Calu3 (cell line): ENCODE measurements at regions of chr14 and their contacts with region 1.

Region 1: DNA sequence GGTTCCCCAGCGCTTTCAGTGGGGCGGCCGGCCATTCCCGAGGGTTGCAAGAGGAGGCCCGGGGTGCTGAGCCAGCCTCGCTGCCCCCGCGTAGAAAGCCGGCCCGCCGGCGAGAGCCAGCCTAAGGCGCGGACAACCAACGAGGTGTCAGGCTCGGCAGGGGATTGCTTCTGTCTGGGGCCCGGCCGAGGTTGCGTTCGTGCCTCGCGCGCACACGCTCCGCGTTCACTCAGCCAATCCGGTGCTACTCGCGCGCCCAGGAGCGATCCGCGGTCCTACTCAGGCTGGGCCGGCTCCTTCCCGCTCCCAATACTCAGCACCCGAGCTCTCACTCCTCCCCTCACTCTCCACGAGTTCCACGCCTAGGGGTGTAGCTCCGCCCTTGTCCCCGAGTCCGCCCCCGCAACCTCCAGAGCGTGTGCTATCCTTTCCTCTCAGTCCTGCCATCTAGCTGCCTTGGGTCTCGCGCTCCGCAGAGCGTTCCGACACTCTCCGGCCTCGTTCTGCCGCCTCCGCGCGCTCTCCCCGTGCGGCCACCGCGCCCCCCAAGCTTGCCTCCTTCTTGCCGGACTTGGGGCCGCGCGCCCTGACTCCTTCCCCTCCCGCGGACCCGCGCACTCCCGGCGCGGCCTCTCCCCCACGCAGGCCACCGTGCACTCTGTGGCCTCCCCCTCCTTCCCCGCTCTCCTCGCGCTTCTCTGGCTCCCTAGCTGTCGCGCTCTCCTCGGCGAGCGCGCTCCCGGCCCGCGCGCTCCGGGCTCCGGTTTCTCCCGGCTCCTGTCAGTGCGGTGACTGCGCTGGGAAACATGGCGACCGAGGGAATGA is at the start of gene GPHN:
- DNase-seq: peak; percentile 95
- H3K4me3 Mint-ChIP-seq: peak within 1 kb of the TSS; percentile 99
- H3K27ac Mint-ChIP-seq: peak within 1 kb of the TSS; percentile 89
- H3K4me1 Mint-ChIP-seq: peaks cover 16% of the 10 kb centered on the region
- H3K27me3 Mint-ChIP-seq: no peaks in the 10 kb centered on the region
- CTCF ChIP-seq: no peak
- total RNA-seq, gene GPHN: 34.9 and 35.0 TPM in 2 replicates

Region 2: GRCh38 chr14:66600416-66600815 is 92.5 kb after region 1 on chr14:
- CTCF ChIA-PET with region 1: no interaction called
- intact Hi-C with region 1: loop called (anchors 5 kb)
- DNase-seq: no peak
- H3K4me3 Mint-ChIP-seq: no peak overlapping the region
- H3K27ac Mint-ChIP-seq: peak overlapping the region; percentile 33
- H3K4me1 Mint-ChIP-seq: peaks cover 18% of the 10 kb centered on the region
- H3K27me3 Mint-ChIP-seq: no peaks in the 10 kb centered on the region
- CTCF ChIP-seq: no peak

Region 3: GRCh38 chr14:66643344-66643743 is 135.4 kb after region 1 on chr14:
- CTCF ChIA-PET with region 1: no interaction called
- intact Hi-C with region 1: loop called (anchors 5 kb)
- DNase-seq: no peak
- H3K4me3 Mint-ChIP-seq: no peak overlapping the region
- H3K27ac Mint-ChIP-seq: no peak overlapping the region
- H3K4me1 Mint-ChIP-seq: peaks cover 37% of the 10 kb centered on the region
- H3K27me3 Mint-ChIP-seq: no peaks in the 10 kb centered on the region
- CTCF ChIP-seq: no peak

Region 4: GRCh38 chr14:66884149-66884548 is 376.2 kb after region 1 on chr14:
- CTCF ChIA-PET with region 1: no interaction called
- intact Hi-C with region 1: no loop called
- DNase-seq: no peak
- H3K4me3 Mint-ChIP-seq: no peak overlapping the region
- H3K27ac Mint-ChIP-seq: no peak overlapping the region
- H3K4me1 Mint-ChIP-seq: no peaks in the 10 kb centered on the region
- H3K27me3 Mint-ChIP-seq: no peaks in the 10 kb centered on the region
- CTCF ChIP-seq: no peak